ENCODE measurements at regions of chr18 and their contacts with region 1.

Region 1: GRCh38 chr18:2715990-2716389 is 60.5 kb downstream of the SMCHD1 start:
- DNase-seq: no peak
- H3K4me3 Mint-ChIP-seq: no peak overlapping the region
- H3K27ac Mint-ChIP-seq: peak overlapping the region; percentile 15
- H3K4me1 Mint-ChIP-seq: peaks cover 43% of the 10 kb centered on the region
- H3K27me3 Mint-ChIP-seq: no peaks in the 10 kb centered on the region

Region 2: DNA sequence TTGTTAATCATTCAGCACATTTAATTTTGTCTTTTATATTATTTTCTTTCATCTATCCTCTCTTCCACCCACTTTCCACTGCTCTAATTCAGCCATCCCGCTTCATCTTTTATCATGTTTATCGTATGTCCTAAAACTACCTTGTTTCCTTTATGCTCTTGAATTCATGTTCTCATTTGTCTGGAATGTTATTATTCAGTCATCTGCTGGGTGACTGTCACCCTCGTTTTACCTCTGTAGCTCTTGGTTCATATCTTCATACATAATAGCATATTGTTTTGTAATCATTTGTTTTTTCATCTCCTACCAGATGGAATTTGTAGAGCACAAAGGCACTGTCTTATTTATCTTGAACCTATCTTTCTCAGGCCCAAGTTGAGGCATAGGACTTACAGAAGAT is 23.5 kb before region 1 on chr18:
- intact Hi-C with region 1: loop called (anchors 2 kb)
- DNase-seq: no peak
- H3K4me3 Mint-ChIP-seq: no peak overlapping the region
- H3K27ac Mint-ChIP-seq: no peak overlapping the region
- H3K4me1 Mint-ChIP-seq: peaks cover 35% of the 10 kb centered on the region
- H3K27me3 Mint-ChIP-seq: no peaks in the 10 kb centered on the region

Region 3: DNA sequence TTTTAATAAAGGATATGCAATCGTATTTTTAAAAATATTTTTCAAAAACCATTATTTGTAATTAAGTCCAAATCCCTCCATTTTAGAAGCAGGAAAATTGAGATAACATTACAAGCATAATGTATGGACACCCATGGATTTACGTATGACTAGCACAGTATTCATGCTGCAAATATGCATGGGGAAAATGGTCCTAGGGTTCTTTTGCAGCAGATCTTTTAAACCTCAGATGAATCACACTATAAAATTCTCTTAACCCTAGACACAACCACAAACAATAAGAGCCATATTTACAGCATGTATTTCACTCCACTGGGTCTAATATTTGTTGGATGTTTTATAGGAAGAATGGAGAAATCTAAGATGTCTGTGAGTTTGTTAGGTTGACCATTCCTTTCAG is 1187.3 kb after region 1 on chr18:
- intact Hi-C with region 1: no loop called
- DNase-seq: no peak
- H3K4me3 Mint-ChIP-seq: no peak overlapping the region
- H3K27ac Mint-ChIP-seq: no peak overlapping the region
- H3K4me1 Mint-ChIP-seq: no peaks in the 10 kb centered on the region
- H3K27me3 Mint-ChIP-seq: peaks cover 3% of the 10 kb centered on the region